ENCODE measurements at regions of chr5 and their contacts with region 1.

Region 1: DNA sequence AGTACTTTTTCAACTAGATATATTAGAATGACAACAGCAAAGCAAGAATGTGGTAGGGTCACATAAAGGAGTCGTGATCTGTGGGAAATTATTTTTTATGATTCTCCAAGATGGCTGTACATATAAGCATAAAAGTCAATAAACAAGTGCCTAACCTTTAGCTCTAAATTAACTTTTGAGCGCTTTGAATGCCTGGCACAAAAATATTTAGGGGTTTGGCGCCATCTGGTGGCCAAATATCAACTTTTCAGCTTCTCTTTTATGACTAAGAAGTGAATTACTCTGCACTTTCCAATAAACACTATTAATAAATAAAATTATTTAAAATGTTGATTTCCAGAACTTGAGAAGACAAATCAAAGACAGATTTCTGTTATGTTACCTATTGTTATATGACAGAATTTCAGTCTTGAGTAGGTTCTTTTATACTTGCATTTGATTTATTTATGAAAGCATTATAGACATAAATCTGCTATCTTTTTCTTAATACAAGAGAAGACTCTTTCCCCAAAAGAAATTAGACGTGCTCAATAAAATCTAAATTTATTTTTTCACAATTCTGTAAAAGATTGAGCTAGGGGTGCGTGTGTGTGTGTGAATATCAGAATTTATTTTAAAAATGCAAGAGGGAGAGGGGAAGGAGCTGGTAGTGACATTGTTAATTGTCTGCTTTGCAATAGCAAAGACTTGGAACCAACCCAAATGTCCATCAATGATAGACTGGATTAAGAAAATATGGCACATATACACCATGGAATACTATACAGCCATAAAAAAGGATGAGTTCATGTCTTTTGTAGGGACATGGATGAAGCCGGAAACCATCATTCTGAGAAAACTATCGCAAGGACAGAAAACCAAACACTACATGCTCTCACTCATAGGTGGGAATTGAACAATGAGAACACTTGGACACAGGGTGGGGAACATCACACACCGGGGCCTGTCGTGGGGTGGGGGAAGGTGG is 36.7 kb upstream of the ARRDC3 start:
- DNase-seq: peak; percentile 77
- H3K4me3 ChIP-seq: no peak overlapping the region
- H3K27ac ChIP-seq: no peak overlapping the region
- H3K4me1 ChIP-seq: no peaks in the 10 kb centered on the region
- H3K27me3 ChIP-seq: no peaks in the 10 kb centered on the region
- CTCF ChIP-seq: peak in 1 of 2 donors; percentile 40
- POLR2A ChIP-seq: no peak

Region 2: GRCh38 chr5:90709323-90710155 is 710.3 kb before region 1 on chr5:
- CTCF ChIA-PET with region 1: interaction called, 9 read pairs
- POLR2A ChIA-PET with region 1: no interaction called
- dilution Hi-C with region 1: no loop called
- intact Hi-C with region 1: loop called (anchors 10 kb)
- DNase-seq: peak; percentile 46
- H3K4me3 ChIP-seq: no peak overlapping the region
- H3K27ac ChIP-seq: no peak overlapping the region
- H3K4me1 ChIP-seq: no peaks in the 10 kb centered on the region
- H3K27me3 ChIP-seq: peaks cover 0 to 4% of the 10 kb centered on the region in 2 experiments
- CTCF ChIP-seq: peak; percentile 61 to 66
- POLR2A ChIP-seq: no peak

Region 3: DNA sequence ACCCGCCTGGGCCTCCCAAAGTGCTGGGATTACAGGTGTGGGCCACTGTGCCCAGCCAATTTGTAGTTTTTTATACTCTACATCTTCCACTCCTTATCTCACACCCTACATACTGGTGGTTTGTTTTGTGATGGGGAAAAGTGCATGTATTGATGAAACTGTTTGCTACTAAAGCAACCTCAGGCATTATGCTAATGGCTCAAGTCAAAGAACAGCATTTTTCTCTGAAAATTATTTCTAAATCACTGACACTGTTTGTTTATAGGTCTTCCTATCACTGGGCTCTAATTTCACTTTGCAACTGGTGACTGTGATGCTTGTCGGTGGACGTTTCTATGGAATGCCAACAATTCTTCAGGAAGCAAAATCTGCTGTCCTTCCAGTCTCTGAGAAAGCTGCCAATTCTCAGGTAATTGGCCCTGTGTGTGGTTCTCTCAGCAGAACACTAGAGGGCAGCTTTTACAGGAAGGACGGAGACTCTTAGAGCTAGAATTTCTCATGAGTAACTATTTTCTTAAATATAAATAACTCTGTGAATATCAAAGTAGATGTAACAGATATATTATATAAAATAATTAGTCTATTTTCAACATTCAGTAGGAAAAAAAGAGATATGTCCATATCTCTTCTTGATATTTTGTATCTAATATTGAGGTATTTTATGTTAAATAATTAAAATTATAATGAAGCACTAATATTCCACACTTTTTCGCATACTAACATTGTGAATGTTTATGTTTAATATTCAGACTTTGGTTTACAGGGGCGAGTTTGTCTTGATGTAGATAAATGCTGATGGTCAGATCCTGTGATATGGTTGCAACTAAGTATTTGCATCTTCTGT is 617.2 kb before region 1 on chr5:
- CTCF ChIA-PET with region 1: interaction called, 231 read pairs
- POLR2A ChIA-PET with region 1: no interaction called
- dilution Hi-C with region 1: no loop called
- intact Hi-C with region 1: loop called (anchors 1 kb)
- DNase-seq: peak; percentile 55
- H3K4me3 ChIP-seq: no peak overlapping the region
- H3K27ac ChIP-seq: no peak overlapping the region
- H3K4me1 ChIP-seq: no peaks in the 10 kb centered on the region
- H3K27me3 ChIP-seq: peaks cover 0 to 4% of the 10 kb centered on the region in 2 experiments
- CTCF ChIP-seq: peak; percentile 66 to 71
- POLR2A ChIP-seq: no peak

Region 4: GRCh38 chr5:90878549-90879196 is 541.2 kb before region 1 on chr5:
- CTCF ChIA-PET with region 1: interaction called, 10 read pairs
- POLR2A ChIA-PET with region 1: no interaction called
- dilution Hi-C with region 1: no loop called
- intact Hi-C with region 1: no loop called
- DNase-seq: peak; percentile 90
- H3K4me3 ChIP-seq: no peak overlapping the region
- H3K27ac ChIP-seq: peak overlapping the region; percentile 55
- H3K4me1 ChIP-seq: peaks cover 16% of the 10 kb centered on the region
- H3K27me3 ChIP-seq: no peaks in the 10 kb centered on the region
- CTCF ChIP-seq: no peak
- POLR2A ChIP-seq: no peak

Region 5: DNA sequence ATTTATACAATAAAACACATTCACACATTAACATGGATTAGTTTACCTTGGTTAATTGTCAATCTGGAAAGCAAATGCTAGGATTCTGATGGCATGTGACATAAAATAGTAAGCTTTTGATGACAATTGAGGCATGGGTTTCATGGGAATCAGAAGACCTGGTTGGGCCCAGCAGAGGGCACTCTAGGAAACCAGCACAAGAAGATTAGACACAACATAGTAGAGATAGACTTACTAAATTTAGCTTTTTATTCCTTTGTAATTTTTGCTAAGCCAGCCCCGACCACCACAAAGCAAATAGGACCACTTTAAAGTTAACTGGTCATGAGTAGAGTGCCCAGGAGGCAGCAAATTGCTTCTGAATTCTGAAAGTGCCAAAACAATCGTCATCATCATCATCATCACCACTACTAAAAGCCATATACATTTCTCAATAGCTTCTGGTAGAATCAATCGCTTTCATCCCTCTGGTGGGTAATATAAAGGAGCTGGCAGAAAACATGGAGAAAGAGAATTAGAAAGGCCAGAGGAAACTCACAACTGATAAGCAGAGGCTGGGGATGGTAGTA is 200.0 kb before region 1 on chr5:
- CTCF ChIA-PET with region 1: interaction called, 30 read pairs
- POLR2A ChIA-PET with region 1: no interaction called
- dilution Hi-C with region 1: no loop called
- intact Hi-C with region 1: no loop called
- DNase-seq: peak; percentile 63
- H3K4me3 ChIP-seq: no peak overlapping the region
- H3K27ac ChIP-seq: no peak overlapping the region
- H3K4me1 ChIP-seq: no peaks in the 10 kb centered on the region
- H3K27me3 ChIP-seq: no peaks in the 10 kb centered on the region
- CTCF ChIP-seq: peak; percentile 30 to 57
- POLR2A ChIP-seq: no peak

Measured in endothelial cell of umbilical vein (primary cell).